ENCODE measurements at regions of chr2 and their contacts with region 1.

Region 1: DNA sequence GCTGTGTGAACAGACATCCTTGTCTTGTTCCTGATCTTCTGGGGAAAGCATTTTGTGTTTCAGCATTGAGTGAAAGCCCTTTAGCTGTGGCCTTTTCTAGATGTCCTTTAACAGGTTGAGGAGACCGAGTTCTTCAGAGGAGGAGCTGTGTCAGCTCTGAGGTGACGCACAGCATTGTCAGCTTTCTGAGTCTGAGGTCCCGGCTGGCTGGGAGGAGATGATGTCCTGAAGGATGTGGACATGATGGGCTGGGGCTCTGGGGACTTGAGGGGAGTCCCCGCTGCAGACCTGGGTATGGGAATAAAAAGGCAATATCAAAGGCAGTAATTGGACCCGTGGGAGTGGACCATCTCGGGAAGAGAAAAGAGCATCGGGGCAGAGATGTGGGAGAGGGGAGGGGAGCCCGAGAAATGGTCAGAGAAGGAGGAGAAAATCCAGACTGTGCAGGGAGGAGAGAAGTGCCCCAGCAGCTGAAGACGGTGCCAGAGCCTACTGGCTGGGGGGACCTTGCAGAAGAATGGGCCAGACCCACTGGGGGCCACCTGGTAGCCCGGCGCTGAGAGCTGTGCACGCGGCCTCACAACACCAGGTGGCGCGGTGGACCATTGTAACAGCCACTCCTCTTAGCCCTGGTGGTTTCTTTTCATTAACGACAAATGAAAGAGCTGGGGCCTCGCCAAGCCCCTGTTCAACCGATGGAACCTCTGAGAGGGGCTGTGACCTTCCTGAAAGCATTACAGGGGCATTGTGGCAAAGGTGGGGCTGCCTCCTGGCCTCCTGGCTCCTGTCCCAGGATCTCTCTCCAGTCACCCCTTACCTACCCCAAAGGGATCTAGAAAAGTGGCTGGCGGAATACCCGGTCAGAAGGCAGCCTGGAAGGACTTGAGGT is 61.6 kb downstream of the ST3GAL5 start:
- DNase-seq: peak; percentile 82 to 89
- H3K4me3 ChIP-seq: peak overlapping the region in 3 of 4 donors; percentile 20 to 34 (median 25)
- H3K27ac ChIP-seq: no peak overlapping the region
- H3K4me1 ChIP-seq: peaks cover 0 to 12% (median 8%) of the 10 kb centered on the region in 4 donors
- H3K27me3 ChIP-seq: peaks cover 0 to 3% (median 0%) of the 10 kb centered on the region in 3 donors
- CTCF ChIP-seq: peak in 5 of 7 experiments; percentile 86 to 91 (median 89)
- EP300 ChIP-seq: no peak
- POLR2A ChIP-seq: no peak

Region 2: GRCh38 chr2:85911814-85912692 is 84.8 kb after region 1 on chr2:
- intact Hi-C with region 1: no loop called
- DNase-seq: no peak
- H3K4me3 ChIP-seq: no peak overlapping the region
- H3K27ac ChIP-seq: peak overlapping the region in 4 of 5 donors; percentile 54 to 81 (median 77)
- H3K4me1 ChIP-seq: peaks cover 0 to 42% (median 17%) of the 10 kb centered on the region in 4 donors
- H3K27me3 ChIP-seq: no peaks in the 10 kb centered on the region
- CTCF ChIP-seq: no peak
- EP300 ChIP-seq: no peak
- POLR2A ChIP-seq: no peak

Region 3: DNA sequence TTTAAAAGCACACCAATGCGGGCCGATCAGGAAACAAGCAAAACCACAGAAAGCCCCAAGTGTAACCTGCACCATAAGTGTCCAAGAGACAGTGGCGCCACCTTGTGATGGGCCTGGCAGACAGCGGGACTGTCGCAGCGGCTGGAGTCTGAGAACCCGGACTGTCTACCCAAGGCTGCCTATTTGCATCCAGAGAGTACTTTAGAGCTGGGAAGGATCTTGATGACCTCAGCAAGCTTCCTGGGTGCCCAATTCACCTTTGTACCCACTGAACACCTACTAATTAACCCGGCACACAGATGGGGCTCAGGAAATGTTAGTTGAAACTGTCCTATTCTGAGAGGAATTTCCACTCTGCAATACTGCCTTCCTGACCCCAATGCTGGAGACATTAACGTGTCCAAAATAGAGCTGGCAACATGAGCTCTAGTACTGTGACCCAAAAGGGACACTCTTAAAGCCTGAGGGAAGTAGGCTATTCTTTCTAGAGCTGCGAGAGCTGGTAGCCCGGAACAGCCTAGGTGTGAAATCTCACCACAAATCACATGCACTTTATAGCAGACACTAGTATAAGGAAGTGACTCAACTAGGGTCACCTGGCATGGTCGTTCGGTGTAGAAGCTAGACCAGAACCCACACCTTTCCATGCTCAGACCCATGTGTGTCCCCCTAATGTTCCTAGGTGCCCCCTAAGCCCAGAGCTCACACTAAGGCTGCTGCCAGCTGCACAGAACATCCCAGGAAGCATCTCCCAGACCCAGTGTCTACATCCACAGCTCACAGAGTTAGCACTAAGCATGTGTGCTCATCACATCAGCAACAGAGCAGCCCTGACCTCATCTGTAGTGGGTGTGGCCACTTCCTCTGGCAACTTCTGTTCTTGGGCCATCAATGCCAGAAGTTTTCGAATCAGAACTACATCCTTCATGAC is 253.0 kb after region 1 on chr2:
- intact Hi-C with region 1: loop called (anchors 2 kb)
- DNase-seq: peak; percentile 86 to 89
- H3K4me3 ChIP-seq: no peak overlapping the region
- H3K27ac ChIP-seq: peak overlapping the region in 2 of 5 donors; percentile 5 to 18
- H3K4me1 ChIP-seq: peaks cover 0 to 22% (median 10%) of the 10 kb centered on the region in 4 donors
- H3K27me3 ChIP-seq: no peaks in the 10 kb centered on the region
- CTCF ChIP-seq: peak in 5 of 7 experiments; percentile 58 to 83 (median 67)
- EP300 ChIP-seq: no peak
- POLR2A ChIP-seq: no peak

Region 4: DNA sequence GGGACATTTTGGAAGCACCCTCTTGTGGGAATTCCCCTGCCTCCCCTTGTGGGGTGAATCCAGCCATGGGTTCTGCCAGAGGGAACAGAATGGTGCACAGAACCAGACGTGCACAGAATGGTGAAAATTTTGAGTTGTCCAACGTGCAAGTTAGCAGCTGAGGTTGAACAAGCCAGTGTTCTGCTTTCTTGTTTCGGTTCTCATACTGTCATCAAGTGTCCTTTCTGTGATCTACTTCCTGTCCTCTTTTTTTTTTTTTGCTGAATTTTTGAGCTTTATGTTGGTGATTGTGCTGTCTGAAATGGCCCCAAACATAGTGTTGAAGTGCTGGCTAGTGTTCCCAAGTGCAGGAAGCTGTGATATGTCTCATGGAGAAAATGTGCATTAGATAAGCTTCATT is 531.7 kb after region 1 on chr2:
- intact Hi-C with region 1: no loop called
- DNase-seq: no peak
- H3K4me3 ChIP-seq: no peak overlapping the region
- H3K27ac ChIP-seq: no peak overlapping the region
- H3K4me1 ChIP-seq: no peaks in the 10 kb centered on the region
- H3K27me3 ChIP-seq: no peaks in the 10 kb centered on the region
- CTCF ChIP-seq: no peak
- EP300 ChIP-seq: no peak
- POLR2A ChIP-seq: no peak

Measured in stomach (tissue), 19 donors.